ENCODE measurements at regions of chr10 and their contacts with region 1.

Region 1: DNA sequence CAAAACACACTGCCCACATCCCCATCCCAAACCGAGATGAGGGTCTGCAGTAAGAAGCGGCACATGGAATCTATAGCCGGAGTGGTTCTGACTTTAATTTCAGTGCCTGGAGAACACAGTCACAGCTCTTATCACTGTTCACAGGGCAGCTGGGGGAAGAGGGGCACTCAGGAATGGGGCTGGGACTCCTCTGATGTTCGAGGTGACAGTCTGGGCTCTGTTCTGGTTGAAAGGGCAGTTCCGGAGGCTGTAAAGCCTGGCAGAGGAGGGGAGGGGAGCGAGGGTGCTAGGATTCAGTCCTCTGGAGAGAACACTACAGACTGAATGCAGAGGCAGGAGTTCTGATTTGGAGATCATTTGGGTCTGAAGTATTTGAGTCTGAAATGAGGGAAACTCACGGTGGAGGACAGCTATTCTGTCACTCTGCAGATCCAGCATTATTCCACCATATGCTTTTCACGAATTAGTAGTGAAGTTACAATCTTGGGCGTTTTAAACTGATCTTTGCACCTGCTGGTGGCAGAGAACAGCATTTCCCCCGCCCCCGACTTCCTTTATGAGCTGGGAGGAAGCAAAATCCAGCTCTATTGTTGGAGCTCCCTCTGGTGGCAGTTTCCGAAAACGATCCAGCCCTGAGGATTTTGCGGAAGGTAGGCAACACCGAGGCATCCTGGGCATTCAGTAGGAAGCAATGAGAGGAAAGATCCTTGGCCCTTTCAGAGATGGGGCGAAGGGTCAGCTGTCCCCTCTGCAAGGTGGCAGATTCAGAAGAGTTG is 22.7 kb upstream of the KCNK18 start:
- DNase-seq: peak; percentile 67 to 74 (median 71)
- ATAC-seq: peak; percentile 97
- H3K4me3 ChIP-seq: no peak overlapping the region
- H3K27ac ChIP-seq: no peak overlapping the region
- H3K4me1 ChIP-seq: peaks cover 8% of the 10 kb centered on the region in 2 experiments; a peak in 3 of 5 replicates
- H3K27me3 ChIP-seq: peaks cover 0 to 21% of the 10 kb centered on the region in 2 experiments; a peak in 2 of 5 replicates
- CTCF ChIP-seq: peak; percentile 82 to 87 (median 85)
- EP300 ChIP-seq: no peak
- POLR2A ChIP-seq: no peak
- RAD21 ChIP-seq: peak; percentile 55 to 77; a peak in 3 of 4 replicates

Region 2: GRCh38 chr10:116444527-116445142 is 730.0 kb before region 1 on chr10:
- CTCF ChIA-PET with region 1: no interaction called
- POLR2A ChIA-PET with region 1: no interaction called
- in situ Hi-C with region 1: no loop called
- intact Hi-C with region 1: loop called (anchors 10 kb)
- DNase-seq: peak; percentile 27 to 46 (median 42)
- ATAC-seq: peak; percentile 82
- H3K4me3 ChIP-seq: no peak overlapping the region
- H3K27ac ChIP-seq: no peak overlapping the region
- H3K4me1 ChIP-seq: no peaks in the 10 kb centered on the region
- H3K27me3 ChIP-seq: no peaks in the 10 kb centered on the region
- CTCF ChIP-seq: peak; percentile 64 to 76 (median 75)
- EP300 ChIP-seq: no peak
- POLR2A ChIP-seq: no peak
- RAD21 ChIP-seq: peak; percentile 59 to 63

Region 3: DNA sequence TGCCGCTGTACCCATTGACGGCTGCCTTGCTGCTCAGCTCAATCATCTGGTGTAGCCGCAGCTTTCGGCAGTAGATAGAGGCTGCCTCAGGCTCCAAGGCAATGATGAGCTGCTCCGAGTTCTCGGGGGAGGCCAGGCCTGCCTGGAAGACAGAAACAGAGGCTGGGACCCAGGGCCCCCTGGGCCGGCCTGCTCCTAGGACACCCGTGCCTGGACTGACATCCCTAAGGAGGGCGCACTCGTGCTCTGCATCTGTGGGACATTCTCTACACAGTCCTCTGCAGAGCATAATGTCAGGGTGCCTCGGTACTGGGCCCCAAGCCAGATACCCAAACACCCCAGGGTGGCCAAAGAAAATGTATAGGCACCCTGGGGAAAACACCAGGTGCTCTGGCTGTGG is 490.8 kb before region 1 on chr10:
- CTCF ChIA-PET with region 1: interaction called, 5 read pairs
- POLR2A ChIA-PET with region 1: no interaction called
- in situ Hi-C with region 1: loop called (anchors 10 kb)
- intact Hi-C with region 1: loop called (anchors 5 kb)
- DNase-seq: no peak
- ATAC-seq: no peak
- H3K4me3 ChIP-seq: no peak overlapping the region
- H3K27ac ChIP-seq: no peak overlapping the region
- H3K4me1 ChIP-seq: no peaks in the 10 kb centered on the region; a peak in 1 of 5 replicates
- H3K27me3 ChIP-seq: peaks cover 0 to 19% of the 10 kb centered on the region in 2 experiments; a peak in 2 of 5 replicates
- CTCF ChIP-seq: no peak
- EP300 ChIP-seq: no peak
- POLR2A ChIP-seq: no peak
- RAD21 ChIP-seq: no peak

Region 4: DNA sequence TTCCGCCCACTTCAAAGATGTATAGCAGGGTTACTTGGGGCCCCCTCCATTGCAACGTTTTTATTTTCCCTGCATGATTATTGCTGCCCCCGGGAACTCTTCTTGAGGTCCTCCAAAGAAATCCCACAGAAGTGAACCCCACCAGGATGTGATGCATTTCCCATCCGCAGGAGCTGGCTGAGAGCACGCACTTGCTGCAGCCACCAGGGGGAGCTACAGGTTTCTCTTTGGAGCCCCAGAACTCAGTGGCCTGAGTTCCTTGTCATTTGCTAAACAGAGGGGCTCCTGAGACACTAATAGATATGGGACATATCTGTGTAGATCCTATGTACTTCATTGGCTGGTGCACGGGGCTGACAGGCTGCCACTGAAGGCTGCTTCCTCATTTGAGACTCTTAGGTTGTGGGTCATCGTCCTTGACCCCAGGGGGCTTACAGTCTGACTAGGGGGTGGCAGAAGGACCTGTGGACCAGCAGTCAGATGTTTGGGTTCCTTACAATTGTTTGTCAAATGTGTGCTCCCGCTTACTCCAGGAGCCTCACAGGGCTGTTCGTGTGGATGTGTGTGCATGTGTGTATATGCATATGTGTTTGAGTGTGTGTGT is 377.6 kb before region 1 on chr10:
- CTCF ChIA-PET with region 1: interaction called, 32 read pairs
- POLR2A ChIA-PET with region 1: interaction called, 3 read pairs
- in situ Hi-C with region 1: no loop called
- intact Hi-C with region 1: loop called (anchors 2 kb)
- DNase-seq: peak; percentile 60 to 73 (median 67)
- ATAC-seq: peak; percentile 94
- H3K4me3 ChIP-seq: no peak overlapping the region
- H3K27ac ChIP-seq: no peak overlapping the region
- H3K4me1 ChIP-seq: no peaks in the 10 kb centered on the region
- H3K27me3 ChIP-seq: peaks cover 0 to 18% of the 10 kb centered on the region in 2 experiments; a peak in 2 of 5 replicates
- CTCF ChIP-seq: peak; percentile 81 to 85 (median 83)
- EP300 ChIP-seq: no peak
- POLR2A ChIP-seq: no peak
- RAD21 ChIP-seq: peak; percentile 76 to 87

Region 5: GRCh38 chr10:116836902-116837523 is 337.6 kb before region 1 on chr10:
- CTCF ChIA-PET with region 1: interaction called, 11 read pairs
- POLR2A ChIA-PET with region 1: no interaction called
- in situ Hi-C with region 1: no loop called
- intact Hi-C with region 1: loop called (anchors 2 kb)
- DNase-seq: peak in 2 of 4 experiments; percentile 6 to 11
- ATAC-seq: peak; percentile 36; the same call in 1 of the 3 replicates
- H3K4me3 ChIP-seq: no peak overlapping the region
- H3K27ac ChIP-seq: no peak overlapping the region
- H3K4me1 ChIP-seq: no peaks in the 10 kb centered on the region
- H3K27me3 ChIP-seq: peaks cover 9 to 35% of the 10 kb centered on the region in 2 experiments; a peak in 4 of 5 replicates
- CTCF ChIP-seq: peak; percentile 22 to 61 (median 54); a peak in 4 of 6 replicates
- EP300 ChIP-seq: no peak
- POLR2A ChIP-seq: no peak
- RAD21 ChIP-seq: peak; percentile 54 to 65

Measured in K562 (cell line).